ENCODE measurements at regions of chr7 and their contacts with region 1.

Region 1: DNA sequence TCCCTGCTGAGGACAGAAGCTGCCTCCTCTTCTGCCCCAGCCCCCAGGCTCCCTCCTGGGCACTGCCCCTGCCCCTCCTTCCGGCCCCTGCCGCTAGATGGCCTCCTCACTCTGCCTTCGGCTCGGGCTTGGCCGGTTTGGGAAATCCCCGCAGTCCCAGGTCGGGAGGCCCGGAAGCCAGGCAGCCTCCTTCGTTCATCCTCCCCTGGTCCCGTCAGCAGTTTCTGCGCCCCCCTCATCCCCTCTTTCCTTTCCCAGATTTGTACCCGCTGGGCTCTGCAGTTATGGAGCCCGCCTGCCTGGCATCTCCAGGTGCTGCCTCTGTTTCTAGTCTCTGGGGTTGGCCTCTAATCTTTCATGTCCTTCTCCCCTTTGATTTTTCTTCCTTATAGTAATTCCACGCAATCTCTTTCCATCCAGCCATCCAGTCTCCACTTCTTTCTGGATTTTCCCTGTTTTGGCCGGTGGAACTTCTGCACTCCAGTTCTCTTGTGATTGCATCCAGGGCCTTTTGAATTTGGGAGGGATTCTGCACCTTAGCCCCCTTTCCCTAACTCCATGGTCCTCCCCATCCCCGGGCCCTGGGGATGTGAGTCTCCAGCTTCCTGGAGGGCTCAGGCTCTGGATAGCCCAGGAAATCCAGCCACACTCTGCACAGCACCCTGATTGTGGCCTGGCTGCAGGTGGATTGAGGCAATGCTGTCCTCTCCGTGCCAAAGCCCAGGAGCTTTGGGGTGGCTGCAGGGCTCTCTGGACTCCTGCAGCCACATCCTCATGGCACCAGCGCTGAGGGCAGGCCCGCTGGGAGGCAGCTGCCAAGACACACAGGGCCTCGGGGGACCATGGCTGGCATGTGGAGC is 3.3 kb upstream of the SHH start:
- DNase-seq: peak; percentile 25 to 83
- H3K4me3 ChIP-seq: no peak overlapping the region
- H3K4me1 ChIP-seq: no peaks in the 10 kb centered on the region
- H3K27me3 ChIP-seq: peaks cover 27% of the 10 kb centered on the region

Region 2: GRCh38 chr7:156156734-156157610 is 341.4 kb after region 1 on chr7:
- in situ Hi-C with region 1: loop called (anchors 25 kb)
- DNase-seq: peak in 1 of 2 experiments; percentile 57
- H3K4me3 ChIP-seq: no peak overlapping the region
- H3K4me1 ChIP-seq: no peaks in the 10 kb centered on the region
- H3K27me3 ChIP-seq: no peaks in the 10 kb centered on the region

Region 3: DNA sequence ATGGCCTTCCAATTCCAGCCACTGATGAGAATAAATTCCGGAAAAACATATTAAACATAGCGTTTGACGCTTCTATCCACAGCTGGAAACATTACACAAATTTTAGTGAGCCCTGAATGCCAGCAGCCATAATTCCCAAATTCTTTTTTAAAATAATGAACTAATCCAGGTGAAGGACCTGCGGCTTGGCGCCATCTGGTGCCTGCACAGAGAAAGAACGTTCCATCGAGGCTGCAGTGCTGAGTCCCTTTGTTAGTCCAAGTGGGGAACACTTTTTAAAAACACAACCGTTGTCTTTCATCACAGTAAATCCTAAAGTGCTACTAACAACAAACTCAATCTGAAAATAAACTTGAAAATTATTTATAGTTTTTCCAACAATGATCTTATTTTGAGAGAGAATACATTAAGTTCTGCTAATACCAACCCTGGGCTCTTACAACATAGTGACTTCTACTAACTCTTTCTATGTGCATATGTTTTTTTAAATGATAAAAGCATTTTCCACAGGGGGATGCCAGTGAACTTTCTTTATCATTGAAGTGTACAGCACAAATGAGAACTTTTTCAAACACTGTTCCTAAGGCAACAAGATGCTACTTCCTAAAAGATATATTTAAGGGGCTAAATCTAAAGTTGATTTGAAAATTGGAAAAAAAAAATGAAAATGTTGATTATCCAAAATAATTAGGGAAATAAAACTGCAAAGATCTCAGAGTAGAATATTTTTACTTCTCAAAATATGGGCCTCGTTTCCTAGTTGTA is 658.1 kb after region 1 on chr7:
- in situ Hi-C with region 1: loop called (anchors 10 kb)
- DNase-seq: peak; percentile 34 to 55
- H3K4me3 ChIP-seq: no peak overlapping the region
- H3K4me1 ChIP-seq: no peaks in the 10 kb centered on the region
- H3K27me3 ChIP-seq: no peaks in the 10 kb centered on the region

Region 4: GRCh38 chr7:156816943-156817572 is 1001.5 kb after region 1 on chr7:
- in situ Hi-C with region 1: loop called (anchors 25 kb)
- DNase-seq: peak in 1 of 2 experiments; percentile 16
- H3K4me3 ChIP-seq: no peak overlapping the region
- H3K4me1 ChIP-seq: no peaks in the 10 kb centered on the region
- H3K27me3 ChIP-seq: no peaks in the 10 kb centered on the region